GM12878 (cell line): ENCODE measurements at regions of chr14 and their contacts with region 1.

Region 1: DNA sequence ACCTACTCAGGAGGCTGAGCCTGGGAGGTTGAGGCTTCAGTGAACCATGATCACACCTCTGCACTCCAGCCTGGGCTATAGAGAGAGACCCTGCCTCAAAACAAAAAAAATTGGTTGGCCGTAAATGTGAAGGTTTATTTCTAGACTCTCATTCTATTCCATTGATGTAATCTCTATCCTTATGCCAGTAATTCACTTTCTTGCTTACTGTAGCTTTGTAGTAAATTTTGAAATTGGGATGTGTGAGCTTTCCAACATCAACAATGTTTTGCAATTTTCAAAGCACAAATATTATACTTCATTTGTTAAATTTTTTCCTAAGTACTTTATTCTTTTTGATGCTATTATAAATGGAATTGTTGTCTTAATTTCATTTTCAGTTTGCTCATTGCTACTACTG is 24.6 kb downstream of the LIN52 start:
- DNase-seq: no peak
- ATAC-seq: no peak
- H3K4me3 ChIP-seq: no peak overlapping the region
- H3K27ac ChIP-seq: no peak overlapping the region
- H3K4me1 ChIP-seq: no peaks in the 10 kb centered on the region
- H3K27me3 ChIP-seq: no peaks in the 10 kb centered on the region
- CTCF ChIP-seq: no peak
- EP300 ChIP-seq: no peak
- POLR2A ChIP-seq: no peak
- RAD21 ChIP-seq: no peak

Region 2: DNA sequence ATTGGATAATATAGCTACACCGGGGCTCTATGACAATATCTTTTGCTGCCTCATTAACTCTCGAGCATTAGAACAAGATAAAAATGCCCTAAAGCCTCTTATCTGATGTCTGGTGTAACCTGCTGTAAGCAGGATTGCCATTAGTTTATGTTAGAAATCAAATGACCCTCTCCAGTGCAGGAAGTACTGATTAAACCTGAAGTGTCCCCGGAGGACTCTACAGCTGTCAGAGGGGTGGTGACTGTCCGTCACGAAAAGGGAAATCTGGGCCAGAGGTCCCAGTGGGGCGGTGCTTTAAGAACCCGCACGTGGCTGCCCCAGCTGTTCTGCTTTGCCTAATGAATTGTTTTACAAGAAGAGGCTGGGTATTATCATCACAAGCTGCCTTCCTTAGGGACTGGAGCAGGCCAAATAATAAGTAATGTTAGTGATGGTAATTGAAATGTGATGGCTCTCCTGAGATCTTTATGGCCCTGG is 31.0 kb after region 1 on chr14:
- CTCF ChIA-PET with region 1: interaction called, 11 read pairs
- POLR2A ChIA-PET with region 1: interaction called, 7 read pairs
- RAD21 ChIA-PET with region 1: no interaction called
- SMC1A ChIA-PET with region 1: interaction called, 6 read pairs
- in situ Hi-C with region 1: no loop called
- intact Hi-C with region 1: no loop called
- DNase-seq: no peak
- ATAC-seq: peak; percentile 36; the same call in 2 of the 3 replicates
- H3K4me3 ChIP-seq: no peak overlapping the region
- H3K27ac ChIP-seq: no peak overlapping the region
- H3K4me1 ChIP-seq: no peaks in the 10 kb centered on the region
- H3K27me3 ChIP-seq: no peaks in the 10 kb centered on the region
- CTCF ChIP-seq: no peak
- EP300 ChIP-seq: no peak
- POLR2A ChIP-seq: no peak
- RAD21 ChIP-seq: no peak

Region 3: GRCh38 chr14:74249433-74250375 is 140.3 kb after region 1 on chr14:
- CTCF ChIA-PET with region 1: interaction called, 15 read pairs
- POLR2A ChIA-PET with region 1: no interaction called
- RAD21 ChIA-PET with region 1: interaction called, 3 read pairs
- SMC1A ChIA-PET with region 1: interaction called, 3 read pairs
- in situ Hi-C with region 1: loop called (anchors 5 kb)
- intact Hi-C with region 1: loop called (anchors 1 kb)
- DNase-seq: no peak
- ATAC-seq: no peak
- H3K4me3 ChIP-seq: no peak overlapping the region
- H3K27ac ChIP-seq: no peak overlapping the region
- H3K4me1 ChIP-seq: no peaks in the 10 kb centered on the region
- H3K27me3 ChIP-seq: peaks cover 0 to 1% of the 10 kb centered on the region in 2 experiments; a peak in 2 of 4 replicates
- CTCF ChIP-seq: no peak
- EP300 ChIP-seq: no peak
- POLR2A ChIP-seq: no peak
- RAD21 ChIP-seq: no peak

Region 4: DNA sequence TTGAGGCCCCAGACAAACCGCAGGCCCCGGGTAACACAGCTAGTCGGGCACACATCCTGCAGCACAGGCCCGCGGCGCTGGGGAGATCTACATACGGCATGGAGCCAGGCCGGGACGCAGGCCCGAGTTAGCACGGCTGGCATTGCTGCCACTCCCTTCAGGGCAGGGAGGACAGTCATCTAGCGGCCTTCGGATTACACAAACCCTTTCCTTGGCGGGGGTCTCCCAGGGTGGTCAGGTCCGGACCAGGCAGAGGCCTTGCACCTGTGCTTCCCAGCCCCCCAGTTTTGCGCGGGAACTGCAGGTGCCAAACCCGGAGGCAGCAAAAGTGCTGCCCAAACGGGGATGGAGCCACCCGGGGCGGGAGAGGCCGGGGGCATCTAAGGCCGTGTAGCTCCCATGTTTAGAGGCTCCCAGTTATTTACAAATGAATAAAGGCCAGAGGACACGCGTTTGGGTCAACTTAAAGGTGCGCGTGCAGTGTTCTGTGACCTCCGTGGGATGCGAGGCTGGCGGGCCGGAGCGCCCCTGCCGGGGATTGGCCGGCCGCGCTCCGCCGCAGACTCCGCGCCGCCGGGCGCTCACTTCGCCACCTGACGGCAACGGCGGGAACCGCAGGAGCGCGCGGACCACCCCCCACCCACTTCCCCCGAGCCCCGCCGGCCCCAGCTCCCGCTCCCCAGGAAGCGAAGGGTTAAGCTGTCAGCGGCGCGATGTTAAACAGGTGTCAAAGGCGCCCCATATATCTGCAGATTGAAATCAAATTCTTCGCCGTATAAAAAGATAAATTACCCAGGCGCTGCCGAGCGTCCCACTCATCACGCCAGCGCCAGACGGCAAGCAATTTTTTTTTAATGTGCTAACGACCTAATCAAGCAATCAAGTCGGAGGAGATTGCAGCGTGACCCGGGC is 148.0 kb after region 1 on chr14:
- CTCF ChIA-PET with region 1: interaction called, 15 read pairs
- POLR2A ChIA-PET with region 1: no interaction called
- RAD21 ChIA-PET with region 1: interaction called, 3 read pairs
- SMC1A ChIA-PET with region 1: interaction called, 3 read pairs
- in situ Hi-C with region 1: loop called (anchors 5 kb)
- intact Hi-C with region 1: no loop called
- DNase-seq: no peak
- ATAC-seq: peak; percentile 96
- H3K4me3 ChIP-seq: peak overlapping the region; percentile 68
- H3K27ac ChIP-seq: no peak overlapping the region
- H3K4me1 ChIP-seq: peaks cover 6% of the 10 kb centered on the region
- H3K27me3 ChIP-seq: peaks cover 3 to 4% of the 10 kb centered on the region in 2 experiments; a peak in 3 of 4 replicates
- CTCF ChIP-seq: peak; percentile 81 to 88 (median 85)
- EP300 ChIP-seq: no peak
- POLR2A ChIP-seq: no peak
- RAD21 ChIP-seq: peak; percentile 37; the same call in 1 of the 2 replicates

Region 5: DNA sequence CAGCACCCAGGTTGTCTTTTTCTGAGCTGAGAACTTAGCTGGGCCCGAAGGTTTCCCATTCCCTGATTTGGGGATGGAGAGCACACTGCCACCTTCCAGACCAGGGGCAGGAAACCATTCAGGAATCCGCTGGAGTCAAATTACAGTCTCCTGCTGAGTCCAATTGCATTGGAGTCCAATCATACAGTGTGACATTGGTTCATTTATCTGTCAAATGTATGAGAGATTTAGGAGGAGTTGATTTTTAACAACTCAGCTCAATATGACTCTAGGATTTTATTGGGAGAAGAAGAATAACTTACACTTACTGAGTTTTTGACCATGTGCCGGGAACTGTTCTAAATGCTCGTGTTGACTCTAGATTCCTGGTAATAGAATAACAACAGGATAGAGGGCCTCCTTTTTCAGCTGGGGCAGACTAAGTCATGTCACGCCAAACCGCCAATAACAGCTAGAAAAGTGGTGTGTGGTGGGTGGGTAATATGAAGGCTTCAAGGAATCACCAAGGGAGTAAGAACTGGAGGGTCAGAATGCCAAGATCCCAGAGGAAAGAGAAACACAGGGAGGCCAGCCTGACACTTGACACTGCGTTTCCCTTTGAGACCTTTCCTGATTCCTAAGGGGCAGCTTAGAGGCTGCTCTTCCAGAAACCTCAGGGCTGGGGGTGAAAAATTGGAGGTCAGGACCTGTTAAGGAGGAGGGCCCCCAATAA is 305.2 kb after region 1 on chr14:
- CTCF ChIA-PET with region 1: no interaction called
- POLR2A ChIA-PET with region 1: no interaction called
- RAD21 ChIA-PET with region 1: no interaction called
- SMC1A ChIA-PET with region 1: no interaction called
- in situ Hi-C with region 1: no loop called
- intact Hi-C with region 1: no loop called
- DNase-seq: no peak
- ATAC-seq: no peak
- H3K4me3 ChIP-seq: no peak overlapping the region
- H3K27ac ChIP-seq: no peak overlapping the region
- H3K4me1 ChIP-seq: no peaks in the 10 kb centered on the region
- H3K27me3 ChIP-seq: peaks cover 0 to 5% of the 10 kb centered on the region in 2 experiments; a peak in 2 of 4 replicates
- CTCF ChIP-seq: no peak
- EP300 ChIP-seq: no peak
- POLR2A ChIP-seq: no peak
- RAD21 ChIP-seq: no peak